ENCODE measurements at regions of chr17 and their contacts with region 1.

Region 1: GRCh38 chr17:50478391-50479381 is at the start of gene RSAD1:
- DNase-seq: no peak
- ATAC-seq: peak; percentile 89
- H3K4me3 ChIP-seq: peak within 1 kb of the TSS; percentile 88 to 98
- H3K27ac ChIP-seq: peak within 1 kb of the TSS; percentile 93
- H3K4me1 ChIP-seq: peaks cover 30% of the 10 kb centered on the region
- H3K27me3 ChIP-seq: no peaks in the 10 kb centered on the region
- CTCF ChIP-seq: peak; percentile 100
- total RNA-seq, gene RSAD1: 40.2 TPM

Region 2: DNA sequence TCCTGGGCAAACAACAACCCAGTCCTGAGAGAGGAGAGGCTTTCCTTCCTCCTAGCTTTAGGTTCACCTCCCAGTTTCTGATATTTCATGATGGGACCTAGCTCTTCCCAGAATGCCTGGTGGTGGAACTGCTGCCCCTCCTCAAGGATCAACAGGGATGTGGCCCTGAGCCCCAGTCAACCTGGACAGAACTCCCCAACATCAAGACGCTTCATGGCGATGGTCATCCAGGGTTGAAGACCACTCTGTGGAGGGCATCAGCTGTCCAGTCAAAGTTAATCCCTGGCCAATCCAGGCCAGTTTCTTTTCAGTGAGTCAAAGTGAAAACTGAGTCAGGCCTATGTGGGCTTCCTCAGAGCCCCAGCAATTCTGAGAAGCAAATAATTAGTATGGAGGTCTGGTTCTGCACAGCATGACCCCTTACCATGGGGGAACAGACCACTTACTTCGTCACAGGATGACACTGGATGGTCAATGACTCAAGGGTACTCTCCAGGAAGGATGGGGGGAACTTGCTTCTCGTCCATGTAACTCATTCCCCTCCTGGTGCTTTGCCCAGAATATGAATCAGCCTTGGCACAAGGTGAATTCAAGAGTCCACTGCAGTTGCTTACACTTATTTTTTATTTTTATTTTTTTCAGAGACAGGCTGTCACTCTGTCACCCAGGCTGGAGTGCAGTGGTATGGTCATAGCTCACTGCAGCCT is 147.4 kb before region 1 on chr17:
- CTCF ChIA-PET with region 1: no interaction called
- POLR2A ChIA-PET with region 1: interaction called, 11 read pairs
- in situ Hi-C with region 1: no loop called
- intact Hi-C with region 1: no loop called
- DNase-seq: no peak
- ATAC-seq: no peak
- H3K4me3 ChIP-seq: no peak overlapping the region
- H3K27ac ChIP-seq: no peak overlapping the region
- H3K4me1 ChIP-seq: no peaks in the 10 kb centered on the region
- H3K27me3 ChIP-seq: no peaks in the 10 kb centered on the region; the same call in 1 of the 2 replicates
- CTCF ChIP-seq: no peak

Region 3: DNA sequence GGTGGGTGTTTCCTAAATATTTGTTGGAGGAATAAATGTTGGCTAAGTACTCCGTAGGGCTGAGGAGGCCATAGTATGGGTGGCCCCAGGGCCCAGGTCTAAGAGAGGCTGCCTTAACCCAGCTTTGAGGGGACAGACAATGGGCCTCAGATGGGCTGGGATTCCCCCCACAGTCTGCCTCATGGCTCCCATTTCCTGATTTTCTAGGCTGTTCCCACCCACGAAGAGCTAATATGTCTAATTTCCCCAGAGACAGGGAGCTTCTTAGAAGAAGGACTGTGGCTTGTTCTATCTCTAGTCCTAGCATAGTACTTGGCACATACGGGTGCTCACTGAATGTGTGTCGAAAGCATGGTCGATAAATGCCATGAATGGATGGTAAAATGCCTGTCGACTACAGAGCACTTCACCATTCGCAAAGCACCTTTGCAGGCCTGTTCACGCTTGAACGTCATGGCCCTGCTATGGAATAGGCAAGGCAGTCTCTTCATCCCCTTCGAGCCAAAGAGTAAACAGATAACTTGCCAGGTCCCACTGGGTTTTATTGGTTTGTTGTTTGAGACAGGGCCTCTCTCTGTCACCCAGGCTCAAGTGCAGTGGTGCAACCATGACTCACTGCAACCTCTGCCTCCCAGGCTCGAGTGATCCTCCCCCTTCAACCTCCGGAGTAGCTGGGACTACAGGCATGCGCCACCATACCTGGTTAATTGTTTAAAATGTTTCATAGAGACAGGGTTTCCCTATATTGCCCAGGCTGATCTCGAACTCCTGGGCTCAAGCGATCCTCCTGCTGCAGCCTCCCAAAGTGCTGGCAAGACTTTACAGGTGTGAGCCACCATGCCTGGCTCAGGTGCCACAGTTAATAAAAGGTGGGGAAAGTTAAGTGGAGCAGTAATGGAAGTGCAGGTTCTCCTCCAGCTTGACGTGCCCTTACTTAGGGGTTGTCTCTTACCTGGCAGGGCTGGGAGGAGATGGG is 19.7 kb before region 1 on chr17:
- CTCF ChIA-PET with region 1: interaction called, 12 read pairs
- POLR2A ChIA-PET with region 1: no interaction called
- in situ Hi-C with region 1: no loop called
- intact Hi-C with region 1: no loop called
- DNase-seq: no peak
- ATAC-seq: no peak
- H3K4me3 ChIP-seq: no peak overlapping the region
- H3K27ac ChIP-seq: no peak overlapping the region
- H3K4me1 ChIP-seq: no peaks in the 10 kb centered on the region
- H3K27me3 ChIP-seq: no peaks in the 10 kb centered on the region
- CTCF ChIP-seq: no peak

Region 4: DNA sequence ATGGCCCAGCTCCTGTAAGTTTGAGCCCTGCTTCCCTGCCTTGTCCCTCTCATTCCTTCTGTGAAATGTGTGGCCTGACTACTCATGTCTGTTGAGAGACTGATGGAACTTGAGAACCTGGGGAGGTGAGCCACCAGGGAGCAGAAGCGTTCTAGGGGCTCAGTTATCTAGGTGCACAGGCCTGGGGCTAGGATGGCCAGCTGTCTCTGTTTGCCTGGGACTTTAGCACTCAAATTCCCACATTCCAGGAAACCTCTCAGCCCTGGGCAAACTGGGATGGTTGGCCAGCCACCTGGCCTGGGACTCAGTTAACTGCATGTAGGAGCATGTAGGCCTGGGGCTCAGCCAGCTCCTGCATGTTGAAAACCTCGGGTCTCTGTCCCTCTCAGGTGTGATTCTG is 44.5 kb after region 1 on chr17:
- CTCF ChIA-PET with region 1: no interaction called
- POLR2A ChIA-PET with region 1: no interaction called
- in situ Hi-C with region 1: no loop called
- intact Hi-C with region 1: no loop called
- DNase-seq: no peak
- ATAC-seq: no peak
- H3K4me3 ChIP-seq: no peak overlapping the region
- H3K27ac ChIP-seq: no peak overlapping the region
- H3K4me1 ChIP-seq: no peaks in the 10 kb centered on the region
- H3K27me3 ChIP-seq: no peaks in the 10 kb centered on the region
- CTCF ChIP-seq: no peak

Region 5: DNA sequence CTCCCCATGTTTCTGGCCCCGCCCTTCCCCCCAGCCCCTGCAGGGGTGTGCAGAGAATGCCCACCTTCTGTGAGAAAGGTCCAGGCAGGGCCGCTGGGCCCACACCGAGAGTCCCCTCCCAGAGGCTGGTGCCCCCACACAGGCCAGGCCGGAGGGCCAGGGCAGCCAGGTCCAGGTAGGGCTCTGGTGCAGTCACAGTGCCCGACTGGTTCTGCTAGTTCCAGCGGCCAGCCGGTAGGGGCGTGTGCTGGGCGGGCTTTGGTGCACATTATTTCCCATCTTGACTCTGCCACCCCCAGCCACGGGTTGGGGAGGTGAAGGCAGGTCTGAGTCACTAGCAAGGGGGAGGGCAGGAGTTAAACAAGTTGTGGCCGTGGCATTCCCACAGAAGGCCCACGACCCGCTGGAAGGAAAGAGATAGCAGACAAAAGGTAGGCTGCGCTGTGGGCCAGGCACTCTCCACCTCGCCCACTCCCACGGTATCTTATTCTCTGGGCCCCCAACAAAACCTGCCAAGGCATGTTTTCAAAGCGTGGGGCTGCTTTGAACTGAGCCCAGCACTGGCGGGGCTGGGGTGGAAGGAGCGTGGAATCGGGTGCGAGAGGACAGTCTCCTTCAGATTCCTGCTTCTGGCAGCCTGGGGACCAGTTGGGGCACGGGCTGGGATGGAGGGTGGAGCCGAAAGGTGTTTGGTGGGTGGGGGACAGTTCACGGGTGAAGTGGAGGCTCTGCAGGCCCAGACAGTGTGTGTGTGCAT is 55.7 kb after region 1 on chr17:
- CTCF ChIA-PET with region 1: no interaction called
- POLR2A ChIA-PET with region 1: no interaction called
- in situ Hi-C with region 1: no loop called
- intact Hi-C with region 1: loop called (anchors 5 kb)
- DNase-seq: no peak
- ATAC-seq: peak; percentile 79
- H3K4me3 ChIP-seq: peak overlapping the region; percentile 16 to 34
- H3K27ac ChIP-seq: peak overlapping the region; percentile 40
- H3K4me1 ChIP-seq: peaks cover 38% of the 10 kb centered on the region
- H3K27me3 ChIP-seq: no peaks in the 10 kb centered on the region
- CTCF ChIP-seq: peak; percentile 50; the same call in 1 of the 2 replicates

Region 6: DNA sequence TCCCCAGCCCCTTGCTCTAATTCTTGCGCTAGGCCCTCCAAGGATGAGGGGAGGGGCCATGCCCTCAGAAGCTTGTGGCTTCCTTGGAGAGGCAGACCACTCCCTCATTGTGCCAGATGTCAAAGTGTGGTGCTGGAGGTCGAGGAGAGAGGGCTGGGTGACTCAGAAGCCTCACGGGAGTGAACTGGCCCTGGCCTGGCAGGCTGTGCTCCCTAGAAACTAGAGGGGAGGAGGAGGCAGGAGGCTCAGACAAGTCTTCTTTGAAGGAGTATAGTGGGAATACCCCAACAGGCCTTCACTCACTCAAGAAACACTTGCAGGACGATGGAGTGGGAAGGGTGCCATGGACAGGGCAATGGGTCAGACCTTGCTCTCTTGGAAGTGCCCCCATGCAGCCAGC is 210.6 kb after region 1 on chr17:
- CTCF ChIA-PET with region 1: no interaction called
- POLR2A ChIA-PET with region 1: no interaction called
- in situ Hi-C with region 1: no loop called
- intact Hi-C with region 1: loop called (anchors 5 kb)
- DNase-seq: no peak
- ATAC-seq: peak; percentile 16; the same call in 1 of the 2 replicates
- H3K4me3 ChIP-seq: no peak overlapping the region
- H3K27ac ChIP-seq: peak overlapping the region; percentile 29
- H3K4me1 ChIP-seq: peaks cover 83% of the 10 kb centered on the region
- H3K27me3 ChIP-seq: no peaks in the 10 kb centered on the region
- CTCF ChIP-seq: no peak

Region 7: GRCh38 chr17:50710025-50710424 is 231.3 kb after region 1 on chr17:
- CTCF ChIA-PET with region 1: no interaction called
- POLR2A ChIA-PET with region 1: no interaction called
- in situ Hi-C with region 1: no loop called
- intact Hi-C with region 1: no loop called
- DNase-seq: no peak
- ATAC-seq: no peak
- H3K4me3 ChIP-seq: no peak overlapping the region
- H3K27ac ChIP-seq: 0 out of 2 replicates have a peak overlapping the region, but pooled peaks have one; percentile 13
- H3K4me1 ChIP-seq: peaks cover 14% of the 10 kb centered on the region
- H3K27me3 ChIP-seq: no peaks in the 10 kb centered on the region
- CTCF ChIP-seq: no peak

Measured in Panc1 (cell line).